H1 (cell line): ENCODE measurements at regions of chr4 and their contacts with region 1.

Region 1: DNA sequence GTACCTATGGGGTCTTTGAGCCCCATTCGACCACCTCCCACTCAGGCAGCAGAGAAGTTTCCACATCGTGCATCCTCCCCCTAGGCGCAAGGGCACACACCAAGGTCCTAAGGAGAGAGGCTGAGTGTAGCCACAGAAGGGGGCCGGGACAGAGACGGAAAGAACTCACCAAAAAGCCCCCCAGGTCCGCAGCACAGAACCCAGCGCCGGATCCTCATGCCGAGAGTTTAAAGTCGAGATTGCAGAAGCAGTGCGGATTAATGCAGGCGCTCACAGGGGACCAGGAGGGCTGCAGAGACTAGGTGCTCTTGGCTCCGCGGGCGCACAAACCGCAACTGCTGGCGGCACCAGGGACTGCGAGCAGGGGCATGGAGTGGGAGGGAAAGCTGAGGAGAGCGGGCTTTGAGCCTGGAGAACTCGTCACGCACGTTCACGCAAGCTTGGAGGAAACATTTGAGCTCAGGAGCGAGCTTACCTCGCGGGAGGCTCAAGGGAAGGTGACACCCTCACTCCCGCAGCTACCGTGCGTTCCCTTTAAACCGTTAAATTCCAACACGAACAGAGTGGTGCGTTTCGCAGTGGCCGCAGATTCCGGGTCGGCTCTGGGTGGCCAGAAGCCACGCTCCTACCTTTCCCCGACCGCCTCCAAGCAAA is 8.5 kb downstream of the NKX3-2 start:
- DNase-seq: peak in 1 of 2 experiments; percentile 59
- H3K4me3 ChIP-seq: 0 out of 8 replicates have a peak overlapping the region, but pooled peaks of 1 of the 4 experiments have one; percentile 4
- H3K27ac ChIP-seq: no peak overlapping the region
- H3K4me1 ChIP-seq: peaks cover 6 to 31% (median 13%) of the 10 kb centered on the region in 4 experiments
- H3K27me3 ChIP-seq: peaks cover 89 to 100% (median 98%) of the 10 kb centered on the region in 4 experiments
- CTCF ChIP-seq: peak in 1 of 3 experiments; percentile 9; a peak in 1 of 4 replicates
- EP300 ChIP-seq: no peak
- POLR2A ChIP-seq: no peak
- RAD21 ChIP-seq: peak in 1 of 2 experiments; percentile 4; a peak in 1 of 4 replicates

Region 2: DNA sequence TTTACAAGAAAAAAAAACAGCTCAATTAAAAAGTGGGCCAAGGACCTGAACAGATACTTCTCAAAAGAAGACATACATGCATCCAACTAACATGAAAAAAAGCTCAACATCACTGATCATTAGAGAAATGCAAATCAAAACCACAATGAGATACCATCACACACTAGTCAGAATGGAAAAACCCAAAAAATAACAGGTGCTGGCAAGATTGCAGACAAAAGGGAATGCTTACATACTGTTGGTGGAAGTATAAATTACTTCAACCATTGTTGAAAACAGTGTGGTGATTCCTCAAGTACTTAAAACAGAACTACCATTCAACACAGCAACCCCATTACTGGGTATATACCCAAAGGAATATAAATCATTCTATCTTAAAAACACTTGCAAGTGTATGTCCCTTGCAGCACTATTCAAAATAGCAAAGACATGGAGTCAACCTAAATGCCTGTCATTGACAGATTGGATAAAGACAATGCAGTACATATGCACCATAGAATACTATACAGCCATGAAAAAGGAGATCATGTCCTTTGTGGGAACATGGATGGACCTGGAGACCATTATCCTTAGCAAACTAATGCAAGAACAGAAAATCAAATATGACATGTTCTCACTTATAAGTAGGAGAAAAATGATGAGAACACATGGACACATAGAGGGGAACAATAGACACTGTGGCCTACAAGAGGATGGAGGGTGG is 149.3 kb before region 1 on chr4:
- CTCF ChIA-PET with region 1: no interaction called
- POLR2A ChIA-PET with region 1: no interaction called
- DNase-seq: no peak
- H3K4me3 ChIP-seq: no peak overlapping the region
- H3K27ac ChIP-seq: no peak overlapping the region
- H3K4me1 ChIP-seq: 0 out of 7 replicates have a peak, but pooled peaks cover 0 to 2% (median 0%) of the 10 kb centered on the region in 4 experiments
- H3K27me3 ChIP-seq: no peaks in the 10 kb centered on the region
- CTCF ChIP-seq: no peak
- EP300 ChIP-seq: no peak
- POLR2A ChIP-seq: no peak
- RAD21 ChIP-seq: no peak

Region 3: GRCh38 chr4:13522282-13523104 is 13.3 kb before region 1 on chr4:
- CTCF ChIA-PET with region 1: interaction called, 132 read pairs
- POLR2A ChIA-PET with region 1: interaction called, 37 read pairs
- DNase-seq: peak in 1 of 2 experiments; percentile 82
- H3K4me3 ChIP-seq: peak overlapping the region; percentile 9 to 56 (median 37); a peak in 7 of 8 replicates
- H3K27ac ChIP-seq: no peak overlapping the region
- H3K4me1 ChIP-seq: peaks cover 4 to 19% (median 14%) of the 10 kb centered on the region in 4 experiments
- H3K27me3 ChIP-seq: peaks cover 63 to 72% (median 67%) of the 10 kb centered on the region in 4 experiments
- CTCF ChIP-seq: no peak
- EP300 ChIP-seq: no peak
- POLR2A ChIP-seq: no peak
- RAD21 ChIP-seq: no peak

Region 4: DNA sequence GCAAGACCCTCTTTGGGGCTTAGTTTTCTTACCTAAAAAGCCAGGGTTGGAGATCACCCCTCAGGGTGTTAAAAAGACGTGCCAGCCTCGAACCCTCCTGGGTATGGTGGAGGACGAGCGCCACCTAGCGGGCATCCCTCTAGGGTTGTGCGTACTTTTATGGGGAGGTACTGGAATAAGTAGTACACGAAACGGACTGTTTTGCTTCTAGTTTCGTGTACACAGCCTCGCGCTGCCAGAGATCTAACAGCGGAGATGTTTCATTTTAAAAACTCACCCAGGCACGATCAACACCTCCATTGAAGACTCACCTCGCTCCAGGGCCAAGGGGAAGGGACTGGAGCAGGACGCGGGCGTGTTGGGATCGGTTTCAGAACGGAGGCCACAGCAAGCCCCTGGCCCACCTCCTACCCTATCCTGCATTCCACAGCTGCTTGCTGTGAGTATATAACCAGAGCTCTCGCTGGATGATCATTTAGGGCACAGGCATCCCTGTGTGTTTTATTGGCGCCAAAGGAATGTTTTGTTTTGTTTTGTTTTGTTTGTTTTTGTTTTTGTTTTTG is 13.2 kb after region 1 on chr4:
- CTCF ChIA-PET with region 1: interaction called, 132 read pairs
- POLR2A ChIA-PET with region 1: interaction called, 24 read pairs
- DNase-seq: peak; percentile 81 to 99
- H3K4me3 ChIP-seq: peak overlapping the region; percentile 31 to 68 (median 57); a peak in 7 of 8 replicates
- H3K27ac ChIP-seq: no peak overlapping the region
- H3K4me1 ChIP-seq: peaks cover 4 to 8% (median 7%) of the 10 kb centered on the region in 4 experiments
- H3K27me3 ChIP-seq: peaks cover 27 to 60% (median 41%) of the 10 kb centered on the region in 4 experiments
- CTCF ChIP-seq: peak in 2 of 3 experiments; percentile 81 to 91; a peak in 3 of 4 replicates
- EP300 ChIP-seq: no peak
- POLR2A ChIP-seq: no peak
- RAD21 ChIP-seq: peak; percentile 98